ENCODE measurements at regions of chr1 and their contacts with region 1.

Region 1: DNA sequence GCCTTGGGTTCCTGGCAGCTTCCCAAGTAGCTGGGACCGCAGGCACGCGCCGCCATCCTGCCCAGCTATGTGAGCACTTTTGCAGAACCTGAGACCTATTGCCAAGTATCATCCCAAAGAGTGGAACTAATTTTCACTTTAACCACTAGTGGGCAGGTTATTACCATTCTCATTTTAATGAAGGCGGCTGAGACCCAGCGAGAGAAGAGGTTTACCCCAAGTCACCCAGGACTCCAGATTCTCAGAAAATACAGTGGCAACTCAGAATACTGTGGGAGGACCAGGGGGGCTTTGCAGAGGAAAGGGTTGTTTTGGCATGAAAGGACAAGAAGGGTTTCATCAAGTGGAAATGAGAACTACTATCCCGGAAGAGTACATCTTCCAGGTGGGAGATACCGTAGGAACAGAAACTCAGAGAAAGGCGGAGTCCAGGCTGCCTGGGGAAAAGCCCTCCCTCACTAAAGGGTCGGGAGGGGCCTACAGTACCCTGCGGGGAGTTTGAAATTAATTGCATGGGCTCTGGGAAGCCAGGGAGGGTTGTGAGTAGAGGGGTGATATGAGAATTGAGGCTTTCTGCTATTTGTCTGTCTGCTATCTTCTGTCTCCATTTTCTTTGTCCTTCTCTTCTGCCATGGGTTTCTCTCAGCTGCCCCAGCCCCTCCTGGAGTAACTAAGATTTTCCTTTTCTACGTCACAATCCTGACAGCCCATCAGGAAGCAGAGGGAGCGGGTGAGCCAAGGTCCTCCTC is 7.2 kb upstream of the SEMA4A start:
- DNase-seq: peak; percentile 86 to 93 (median 92)
- H3K4me3 ChIP-seq: peak overlapping the region in 5 of 7 experiments; percentile 12 to 57 (median 32)
- H3K27ac ChIP-seq: peak overlapping the region in 1 of 2 experiments; percentile 66
- H3K4me1 ChIP-seq: peaks cover 0 to 48% (median 38%) of the 10 kb centered on the region in 4 experiments
- H3K27me3 ChIP-seq: no peaks in the 10 kb centered on the region

Region 2: GRCh38 chr1:156090822-156091188 is 55.4 kb before region 1 on chr1:
- CTCF ChIA-PET with region 1: interaction called, 1,191 read pairs
- POLR2A ChIA-PET with region 1: no interaction called
- DNase-seq: peak; percentile 79 to 88 (median 81)
- H3K4me3 ChIP-seq: no peak overlapping the region
- H3K27ac ChIP-seq: no peak overlapping the region
- H3K4me1 ChIP-seq: peaks cover 0 to 17% (median 11%) of the 10 kb centered on the region in 4 experiments
- H3K27me3 ChIP-seq: peaks cover 0 to 5% (median 0%) of the 10 kb centered on the region in 5 experiments

Region 3: GRCh38 chr1:156129706-156130581 is 16.2 kb before region 1 on chr1:
- CTCF ChIA-PET with region 1: interaction called, 18 read pairs
- POLR2A ChIA-PET with region 1: no interaction called
- DNase-seq: peak in 2 of 3 donors; percentile 67 to 73
- H3K4me3 ChIP-seq: no peak overlapping the region
- H3K27ac ChIP-seq: no peak overlapping the region
- H3K4me1 ChIP-seq: peaks cover 5 to 53% (median 48%) of the 10 kb centered on the region in 4 experiments
- H3K27me3 ChIP-seq: no peaks in the 10 kb centered on the region

Measured in common myeloid progenitor, CD34-positive (primary cell).